ENCODE measurements at regions of chr1 and their contacts with region 1.

Region 1: GRCh38 chr1:156767101-156767878 is at the start of gene PRCC:
- DNase-seq: peak; percentile 98
- H3K4me3 Mint-ChIP-seq: no peak within 1 kb of the TSS
- H3K27ac Mint-ChIP-seq: no peak within 1 kb of the TSS
- H3K4me1 Mint-ChIP-seq: peaks cover 37% of the 10 kb centered on the region
- H3K27me3 Mint-ChIP-seq: no peaks in the 10 kb centered on the region
- CTCF ChIP-seq: no peak
- total RNA-seq, gene PRCC: 72.8 and 80.4 TPM in 2 replicates

Region 2: DNA sequence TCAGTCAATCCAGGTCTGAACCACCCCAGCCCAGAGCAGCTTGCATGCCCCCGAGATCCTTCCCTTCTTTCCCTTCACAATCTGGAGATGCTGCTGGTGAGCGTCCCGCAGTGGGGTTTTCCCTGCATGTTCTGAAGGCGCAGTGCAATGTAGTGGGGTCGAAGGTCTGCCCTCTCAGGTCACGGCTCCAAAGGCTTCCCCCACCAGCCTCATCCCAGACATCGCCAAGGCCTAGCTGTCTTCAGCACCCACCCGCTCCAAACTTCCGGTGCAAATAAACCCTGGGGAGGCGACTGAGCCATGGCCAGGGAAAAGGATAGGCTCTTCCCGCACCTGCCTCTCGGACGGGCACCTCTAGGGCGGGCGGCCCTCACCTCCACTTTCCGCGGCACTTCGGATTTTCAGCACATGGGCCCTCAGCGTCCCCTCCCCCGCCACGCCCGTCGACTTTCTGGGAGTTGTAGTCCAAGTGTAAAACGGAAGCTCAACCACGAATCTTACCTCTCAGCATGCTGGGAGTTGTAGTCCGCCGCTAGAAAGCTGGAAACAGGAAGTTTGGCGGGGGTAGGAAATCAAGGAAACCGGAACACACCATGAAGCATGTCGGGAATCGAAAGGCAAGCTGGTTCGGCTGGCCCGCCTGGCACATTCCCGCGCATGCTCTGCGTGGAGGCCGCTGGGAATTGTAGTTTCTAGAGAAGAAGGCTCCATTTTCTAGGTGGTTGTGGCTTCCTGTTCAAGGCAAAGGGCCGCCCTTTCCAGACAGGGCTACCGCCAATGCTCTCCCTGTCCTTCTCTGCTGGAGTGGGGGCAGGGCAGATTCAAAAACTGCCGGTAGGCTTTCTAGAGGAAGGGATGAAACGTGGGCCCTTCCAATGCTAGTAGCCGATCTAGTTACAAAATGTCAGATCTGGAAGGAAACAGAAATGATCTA is 26.3 kb before region 1 on chr1 and contains the start of gene MRPL24:
- CTCF ChIA-PET with region 1: interaction called, 13 read pairs
- intact Hi-C with region 1: loop called (anchors 1 kb)
- DNase-seq: peak; percentile 97
- H3K4me3 Mint-ChIP-seq: peak within 1 kb of the TSS; percentile 96
- H3K27ac Mint-ChIP-seq: peak within 1 kb of the TSS; percentile 74
- H3K4me1 Mint-ChIP-seq: peaks cover 47% of the 10 kb centered on the region
- H3K27me3 Mint-ChIP-seq: no peaks in the 10 kb centered on the region
- CTCF ChIP-seq: no peak
- total RNA-seq, gene MRPL24: 130 and 138 TPM in 2 replicates

Region 3: DNA sequence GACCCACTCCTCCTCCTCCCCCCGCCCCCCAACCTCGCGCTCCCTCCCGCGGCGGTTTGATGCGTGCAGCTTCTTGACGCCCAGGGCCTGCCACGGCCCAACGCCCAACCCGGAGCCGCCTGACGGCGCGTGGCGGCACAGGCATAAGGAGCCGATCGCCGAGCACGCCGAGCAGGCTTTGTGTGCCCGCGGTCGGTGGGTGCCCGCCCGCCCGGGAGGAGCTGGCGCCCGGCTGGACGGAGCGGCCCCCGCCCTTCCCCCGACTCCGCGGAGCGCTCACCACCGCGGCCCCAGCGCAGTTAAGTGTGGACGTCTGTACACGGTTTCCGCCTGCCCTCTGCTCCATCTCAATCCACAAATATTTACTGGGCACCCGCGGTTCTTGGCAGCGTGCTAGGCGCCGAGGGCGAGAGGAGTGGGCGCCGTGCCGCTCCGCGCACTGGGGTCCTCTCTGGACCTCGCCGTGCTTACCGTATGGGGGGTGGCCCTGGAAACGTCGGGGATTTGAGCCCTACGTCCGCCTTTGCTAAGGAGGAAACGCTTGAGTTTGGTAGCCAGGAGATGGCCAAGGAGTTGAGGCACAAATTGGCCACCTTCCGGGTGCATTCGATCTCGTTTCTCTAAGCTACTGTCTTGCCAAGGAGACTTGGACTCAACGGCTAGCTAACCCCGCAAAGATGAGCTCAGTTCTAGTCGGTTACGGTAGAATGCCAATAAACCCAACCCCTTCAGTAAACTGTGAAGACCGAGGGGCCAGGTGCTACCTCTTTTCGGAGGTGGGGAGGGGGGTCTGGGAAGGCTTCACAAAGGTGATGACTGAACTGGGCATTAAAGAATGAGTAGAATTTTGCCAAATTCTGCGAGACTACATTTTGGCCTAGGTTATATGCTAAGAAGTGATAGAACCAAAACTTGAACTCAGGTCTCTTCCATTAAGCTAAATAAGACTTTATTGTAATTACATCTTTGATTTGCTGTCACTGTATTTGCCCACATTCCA is 15.2 kb before region 1 on chr1:
- CTCF ChIA-PET with region 1: interaction called, 5 read pairs
- intact Hi-C with region 1: loop called (anchors 2 kb)
- DNase-seq: peak; percentile 98
- H3K4me3 Mint-ChIP-seq: peak overlapping the region; percentile 67
- H3K27ac Mint-ChIP-seq: peak overlapping the region; percentile 93
- H3K4me1 Mint-ChIP-seq: peaks cover 29% of the 10 kb centered on the region
- H3K27me3 Mint-ChIP-seq: no peaks in the 10 kb centered on the region
- CTCF ChIP-seq: no peak

Region 4: DNA sequence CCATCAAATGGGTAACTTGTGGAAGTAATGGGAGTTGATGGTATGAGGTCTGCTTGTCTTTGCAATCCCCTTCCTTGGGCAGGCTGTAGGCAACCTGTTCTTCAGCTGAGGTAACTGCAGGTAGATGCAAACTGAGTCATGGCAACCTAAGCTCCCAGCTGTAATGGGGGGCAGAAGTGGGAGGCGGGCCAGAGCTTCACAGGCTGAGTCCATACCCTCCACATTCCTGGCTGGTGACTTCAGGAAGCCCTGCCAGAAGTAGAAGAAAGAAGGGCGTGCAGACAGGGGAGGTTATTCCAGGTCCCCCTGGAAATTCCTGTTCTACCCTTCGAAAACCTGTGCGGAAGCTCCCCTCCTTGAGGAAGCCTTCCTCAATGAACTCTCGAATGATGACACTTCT is 233.4 kb after region 1 on chr1:
- CTCF ChIA-PET with region 1: no interaction called
- intact Hi-C with region 1: no loop called
- DNase-seq: no peak
- H3K4me3 Mint-ChIP-seq: no peak overlapping the region
- H3K27ac Mint-ChIP-seq: no peak overlapping the region
- H3K4me1 Mint-ChIP-seq: peaks cover 19% of the 10 kb centered on the region
- H3K27me3 Mint-ChIP-seq: no peaks in the 10 kb centered on the region
- CTCF ChIP-seq: no peak

Measured in Calu3 (cell line).